GM12878 (cell line): ENCODE measurements at regions of chr2 and their contacts with region 1.

Region 1: GRCh38 chr2:85390941-85391669 is 19.1 kb downstream of the CAPG start:
- DNase-seq: no peak
- ATAC-seq: peak; percentile 81
- H3K4me3 ChIP-seq: no peak overlapping the region
- H3K27ac ChIP-seq: no peak overlapping the region
- H3K4me1 ChIP-seq: peaks cover 7% of the 10 kb centered on the region
- H3K27me3 ChIP-seq: no peaks in the 10 kb centered on the region
- CTCF ChIP-seq: peak; percentile 74 to 89 (median 76)
- EP300 ChIP-seq: no peak
- POLR2A ChIP-seq: no peak
- RAD21 ChIP-seq: peak; percentile 89

Region 2: GRCh38 chr2:85409845-85410583 is 18.9 kb after region 1 on chr2 and contains the start of gene CAPG:
- CTCF ChIA-PET with region 1: interaction called, 6 read pairs
- POLR2A ChIA-PET with region 1: interaction called, 7 read pairs
- RAD21 ChIA-PET with region 1: interaction called, 10 read pairs
- SMC1A ChIA-PET with region 1: interaction called, 11 read pairs
- in situ Hi-C with region 1: no loop called
- intact Hi-C with region 1: no loop called
- DNase-seq: no peak
- ATAC-seq: peak; percentile 90
- H3K4me3 ChIP-seq: peak within 1 kb of the TSS; percentile 64; the same call in 1 of the 2 replicates
- H3K27ac ChIP-seq: peak within 1 kb of the TSS; percentile 55
- H3K4me1 ChIP-seq: peaks cover 26% of the 10 kb centered on the region
- H3K27me3 ChIP-seq: no peaks in the 10 kb centered on the region
- CTCF ChIP-seq: no peak
- EP300 ChIP-seq: no peak
- POLR2A ChIP-seq: no peak
- RAD21 ChIP-seq: no peak
- polyA plus RNA-seq, gene CAPG: 26.3 to 65.6 TPM

Region 3: GRCh38 chr2:85628658-85629057 is 237.6 kb after region 1 on chr2:
- CTCF ChIA-PET with region 1: no interaction called
- POLR2A ChIA-PET with region 1: no interaction called
- RAD21 ChIA-PET with region 1: no interaction called
- SMC1A ChIA-PET with region 1: no interaction called
- in situ Hi-C with region 1: no loop called
- intact Hi-C with region 1: no loop called
- DNase-seq: no peak
- ATAC-seq: peak; percentile 97
- H3K4me3 ChIP-seq: no peak overlapping the region
- H3K27ac ChIP-seq: peak overlapping the region; percentile 38
- H3K4me1 ChIP-seq: no peaks in the 10 kb centered on the region
- H3K27me3 ChIP-seq: no peaks in the 10 kb centered on the region
- CTCF ChIP-seq: no peak
- EP300 ChIP-seq: no peak
- POLR2A ChIP-seq: no peak
- RAD21 ChIP-seq: no peak